PC-3 (cell line): ENCODE measurements at regions of chr9 and their contacts with region 1.

Region 1: GRCh38 chr9:73050065-73050816 is 97.4 kb upstream of the ALDH1A1 start:
- DNase-seq: no peak
- ATAC-seq: peak; percentile 31; the same call in 1 of the 2 replicates
- H3K4me3 ChIP-seq: no peak overlapping the region
- H3K27ac ChIP-seq: no peak overlapping the region
- H3K4me1 ChIP-seq: no peaks in the 10 kb centered on the region
- H3K27me3 ChIP-seq: peaks cover 38% of the 10 kb centered on the region
- CTCF ChIP-seq: no peak

Region 2: GRCh38 chr9:73006986-73007385 is 43.3 kb before region 1 on chr9:
- CTCF ChIA-PET with region 1: no interaction called
- POLR2A ChIA-PET with region 1: no interaction called
- intact Hi-C with region 1: no loop called
- DNase-seq: no peak
- ATAC-seq: no peak
- H3K4me3 ChIP-seq: no peak overlapping the region
- H3K27ac ChIP-seq: no peak overlapping the region
- H3K4me1 ChIP-seq: no peaks in the 10 kb centered on the region
- H3K27me3 ChIP-seq: peaks cover 45% of the 10 kb centered on the region
- CTCF ChIP-seq: no peak

Region 3: GRCh38 chr9:73067074-73067473 is 16.8 kb after region 1 on chr9:
- CTCF ChIA-PET with region 1: no interaction called
- POLR2A ChIA-PET with region 1: no interaction called
- intact Hi-C with region 1: loop called (anchors 2 kb)
- DNase-seq: no peak
- ATAC-seq: no peak
- H3K4me3 ChIP-seq: no peak overlapping the region
- H3K27ac ChIP-seq: no peak overlapping the region
- H3K4me1 ChIP-seq: no peaks in the 10 kb centered on the region
- H3K27me3 ChIP-seq: peaks cover 12% of the 10 kb centered on the region; the same call in 1 of the 2 replicates
- CTCF ChIP-seq: peak; percentile 43

Region 4: GRCh38 chr9:73093740-73094379 is 43.6 kb after region 1 on chr9:
- CTCF ChIA-PET with region 1: no interaction called
- POLR2A ChIA-PET with region 1: no interaction called
- intact Hi-C with region 1: no loop called
- DNase-seq: no peak
- ATAC-seq: no peak
- H3K4me3 ChIP-seq: peak overlapping the region; percentile 27; the same call in 1 of the 2 replicates
- H3K27ac ChIP-seq: no peak overlapping the region
- H3K4me1 ChIP-seq: peaks cover 7% of the 10 kb centered on the region; the same call in 1 of the 2 replicates
- H3K27me3 ChIP-seq: no peaks in the 10 kb centered on the region
- CTCF ChIP-seq: no peak

Region 5: DNA sequence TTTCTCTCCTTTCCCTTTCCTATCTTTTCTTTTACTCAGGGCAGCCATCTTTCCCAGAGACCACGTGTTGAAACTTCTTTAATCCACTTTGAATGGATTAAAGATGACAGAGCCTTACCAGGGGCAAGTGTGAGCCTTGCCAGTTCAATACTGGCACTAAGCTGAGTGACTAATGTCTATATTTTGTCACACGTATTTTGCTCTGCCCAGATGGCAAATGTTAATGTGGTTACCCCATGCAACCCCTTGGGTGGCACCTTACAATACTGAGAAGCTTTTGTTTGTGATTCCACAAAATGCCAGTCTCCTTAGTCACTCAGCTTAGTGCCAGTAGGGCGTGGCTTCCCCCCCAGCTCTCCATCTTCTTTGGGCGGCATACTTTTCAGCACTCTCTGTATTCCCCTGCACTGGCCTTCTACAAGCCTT is 126.2 kb after region 1 on chr9:
- CTCF ChIA-PET with region 1: no interaction called
- POLR2A ChIA-PET with region 1: interaction called, 11 read pairs
- intact Hi-C with region 1: no loop called
- DNase-seq: peak; percentile 91
- ATAC-seq: peak; percentile 75
- H3K4me3 ChIP-seq: no peak overlapping the region
- H3K27ac ChIP-seq: peak overlapping the region; percentile 82
- H3K4me1 ChIP-seq: peaks cover 50% of the 10 kb centered on the region
- H3K27me3 ChIP-seq: no peaks in the 10 kb centered on the region
- CTCF ChIP-seq: no peak